A673 (cell line): ENCODE measurements at regions of chr21 and their contacts with region 1.

Region 1: DNA sequence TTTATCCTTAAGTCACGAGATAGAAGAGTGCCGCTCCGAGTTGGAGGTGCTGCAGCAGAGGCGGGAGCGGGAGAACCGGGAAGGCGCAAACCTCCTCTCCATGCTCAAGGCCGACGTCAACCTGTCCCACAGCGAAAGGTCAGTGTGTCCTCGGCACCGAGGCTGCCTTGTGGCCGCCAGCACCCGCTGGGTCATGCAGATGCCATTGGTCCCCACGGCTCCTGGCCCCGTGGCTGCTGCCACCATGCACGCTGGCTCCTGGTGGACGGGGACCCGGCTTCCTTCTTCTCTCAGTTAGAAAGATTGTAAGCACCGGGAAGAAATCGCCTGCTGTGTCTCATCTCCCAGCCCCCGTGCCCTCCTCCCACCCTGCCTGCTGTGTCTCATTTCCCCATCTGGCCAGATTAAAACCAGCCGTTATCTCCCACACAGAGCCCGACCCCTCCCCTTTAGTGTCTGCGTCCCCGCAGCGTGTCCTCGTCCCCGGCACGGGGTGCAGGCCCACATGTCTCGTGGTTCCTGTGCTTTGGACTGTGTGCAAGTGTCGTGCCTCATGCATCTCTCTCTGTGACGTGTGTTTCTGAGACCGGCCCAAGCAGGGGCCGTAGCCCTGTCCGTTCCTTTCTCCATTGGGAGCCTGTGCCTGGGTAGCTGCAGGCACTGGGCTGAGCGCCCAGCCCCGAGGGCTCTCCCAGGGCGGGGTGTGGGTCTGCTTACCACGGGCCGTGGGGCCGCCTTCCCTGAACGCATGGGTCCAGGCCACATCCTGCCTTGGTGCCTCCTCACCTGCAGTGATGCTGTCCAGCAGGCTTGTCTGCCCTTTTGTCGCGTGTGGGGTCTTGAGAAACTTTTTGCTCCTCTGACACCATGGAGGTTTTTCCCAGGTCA is 62.1 kb downstream of the PCNT start:
- DNase-seq: no peak
- H3K4me3 ChIP-seq: no peak overlapping the region
- H3K27ac ChIP-seq: no peak overlapping the region
- H3K4me1 ChIP-seq: no peaks in the 10 kb centered on the region
- H3K27me3 ChIP-seq: no peaks in the 10 kb centered on the region
- CTCF ChIP-seq: no peak

Region 2: DNA sequence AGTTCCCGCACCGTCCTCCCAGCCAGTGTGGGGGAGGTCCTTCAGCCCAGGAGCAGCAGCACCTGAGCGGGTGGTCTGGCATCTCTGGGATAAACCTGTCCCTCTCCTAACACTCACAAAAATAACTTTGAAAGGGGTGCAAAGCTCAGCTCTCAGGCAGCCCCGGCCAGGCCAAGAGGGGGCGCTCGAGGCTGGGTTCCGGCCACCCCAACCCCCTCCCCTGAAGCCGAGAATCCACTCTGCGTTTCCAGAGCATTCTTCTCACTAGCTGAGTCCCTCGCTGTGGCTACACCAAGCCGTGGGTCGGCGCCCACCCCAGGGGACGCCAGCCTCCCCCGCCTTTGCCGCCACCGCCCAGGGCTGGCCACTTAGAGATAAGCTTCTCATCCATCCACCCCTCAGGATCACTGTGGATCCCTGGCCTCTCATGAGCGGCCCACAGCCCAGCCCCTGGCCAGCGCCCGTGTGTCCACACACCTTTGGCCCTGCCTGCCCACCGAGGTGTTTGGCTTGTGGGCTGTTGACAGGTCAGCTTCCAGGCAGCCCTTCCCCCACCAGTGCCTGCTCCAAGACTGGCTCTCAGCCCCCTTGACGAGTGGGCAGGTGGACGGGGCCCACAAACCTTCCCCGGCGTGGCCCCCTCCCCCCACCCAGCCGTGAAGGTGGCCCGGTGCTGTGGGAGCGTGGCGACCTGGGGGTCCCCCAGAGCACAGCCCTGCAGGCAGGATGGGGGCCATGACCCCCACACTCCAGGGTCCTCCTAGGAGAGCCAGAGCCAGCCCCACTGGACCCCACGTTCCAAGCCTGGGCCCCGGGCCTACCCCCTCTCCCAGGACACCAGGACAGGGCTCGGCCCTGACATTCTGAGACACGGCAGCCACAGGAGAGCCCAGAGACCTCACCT is 232.6 kb before region 1 on chr21:
- CTCF ChIA-PET with region 1: no interaction called
- POLR2A ChIA-PET with region 1: no interaction called
- intact Hi-C with region 1: no loop called
- DNase-seq: peak; percentile 72
- H3K4me3 ChIP-seq: no peak overlapping the region
- H3K27ac ChIP-seq: peak overlapping the region; percentile 58
- H3K4me1 ChIP-seq: peaks cover 5% of the 10 kb centered on the region
- H3K27me3 ChIP-seq: no peaks in the 10 kb centered on the region
- CTCF ChIP-seq: peak; percentile 88

Region 3: DNA sequence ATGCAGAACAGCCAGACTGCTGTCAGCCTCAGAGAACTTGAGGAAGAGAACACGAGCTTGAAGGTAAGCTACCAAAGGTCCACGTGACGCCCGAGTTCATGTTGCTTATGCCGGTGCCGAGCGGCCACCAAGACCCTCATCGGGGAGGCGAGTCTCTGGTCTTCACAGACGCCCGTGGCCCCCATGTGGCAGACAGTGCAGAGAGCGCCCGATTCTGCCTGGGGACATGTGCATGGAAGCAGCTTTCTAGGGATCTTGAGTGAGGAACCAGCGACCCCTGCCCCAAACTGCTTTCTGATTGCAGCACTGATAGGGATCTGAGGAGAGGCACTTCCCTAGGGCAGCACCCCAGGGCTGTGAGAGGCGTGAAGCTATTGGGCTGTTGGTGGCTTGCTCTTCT is 16.3 kb after region 1 on chr21:
- CTCF ChIA-PET with region 1: no interaction called
- POLR2A ChIA-PET with region 1: no interaction called
- intact Hi-C with region 1: no loop called
- DNase-seq: no peak
- H3K4me3 ChIP-seq: no peak overlapping the region
- H3K27ac ChIP-seq: no peak overlapping the region
- H3K4me1 ChIP-seq: no peaks in the 10 kb centered on the region
- H3K27me3 ChIP-seq: no peaks in the 10 kb centered on the region
- CTCF ChIP-seq: no peak

Region 4: GRCh38 chr21:46425571-46425970 is 39.5 kb after region 1 on chr21:
- CTCF ChIA-PET with region 1: interaction called, 10 read pairs
- POLR2A ChIA-PET with region 1: no interaction called
- intact Hi-C with region 1: no loop called
- DNase-seq: no peak
- H3K4me3 ChIP-seq: no peak overlapping the region
- H3K27ac ChIP-seq: no peak overlapping the region
- H3K4me1 ChIP-seq: no peaks in the 10 kb centered on the region
- H3K27me3 ChIP-seq: no peaks in the 10 kb centered on the region
- CTCF ChIP-seq: no peak